Mucosa of descending colon (tissue), 3 donors: ENCODE measurements at regions of chr18 and their contacts with region 1.

Region 1: DNA sequence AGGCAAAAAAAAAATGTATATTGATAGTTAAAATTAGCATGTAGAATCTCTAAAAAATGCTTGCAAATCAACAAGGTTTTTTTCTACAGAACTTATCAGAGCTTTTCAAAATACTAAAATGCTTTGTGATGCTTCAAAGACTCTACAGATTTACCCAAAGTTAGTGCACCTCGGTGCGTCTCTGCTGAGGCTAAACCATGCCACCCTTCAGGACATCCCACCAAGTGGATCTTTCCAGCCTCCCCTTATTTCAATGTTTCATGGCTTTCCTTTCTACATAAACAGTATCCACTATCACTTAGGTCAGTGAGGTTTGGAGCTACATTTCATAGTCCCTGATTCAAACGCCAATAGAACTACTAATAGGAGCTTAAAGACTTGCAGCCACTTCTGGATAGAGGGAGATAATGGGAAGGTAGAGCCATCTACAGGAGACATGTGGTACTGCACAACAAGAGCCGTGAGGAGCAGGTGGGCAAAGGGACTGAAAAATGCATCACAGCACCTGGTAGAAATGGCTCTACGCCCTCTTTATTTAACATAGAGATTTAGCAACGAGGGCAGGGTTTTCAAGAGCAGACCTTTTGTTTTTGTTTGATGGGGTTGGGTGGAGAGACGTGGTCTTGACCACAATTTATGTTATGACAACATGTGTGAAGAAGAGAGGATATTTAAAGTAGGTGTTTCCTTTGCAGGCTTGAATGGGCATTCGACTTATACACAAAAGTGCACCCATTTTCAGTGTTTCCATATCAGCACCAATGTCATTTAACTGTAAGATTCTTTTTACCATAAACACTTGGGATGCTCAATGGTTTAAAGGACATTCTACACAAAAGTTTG is 56.1 kb upstream of the SLC35G4 start:
- DNase-seq: peak in 1 of 3 donors; percentile 55
- ATAC-seq: peak; percentile 63
- H3K4me3 ChIP-seq: no peak overlapping the region
- H3K4me1 ChIP-seq: no peaks in the 10 kb centered on the region
- CTCF ChIP-seq: peak; percentile 69

Region 2: GRCh38 chr18:10560450-10561045 is 992.8 kb before region 1 on chr18:
- intact Hi-C with region 1: loop called in 1 of 2 experiments (anchors 10 kb)
- DNase-seq: peak in 2 of 3 donors; percentile 36 to 90
- ATAC-seq: peak; percentile 74
- H3K4me3 ChIP-seq: no peak overlapping the region
- H3K4me1 ChIP-seq: no peaks in the 10 kb centered on the region
- CTCF ChIP-seq: peak; percentile 38